Mammary epithelial cell (primary cell): ENCODE measurements at regions of chr7 and their contacts with region 1.

Region 1: DNA sequence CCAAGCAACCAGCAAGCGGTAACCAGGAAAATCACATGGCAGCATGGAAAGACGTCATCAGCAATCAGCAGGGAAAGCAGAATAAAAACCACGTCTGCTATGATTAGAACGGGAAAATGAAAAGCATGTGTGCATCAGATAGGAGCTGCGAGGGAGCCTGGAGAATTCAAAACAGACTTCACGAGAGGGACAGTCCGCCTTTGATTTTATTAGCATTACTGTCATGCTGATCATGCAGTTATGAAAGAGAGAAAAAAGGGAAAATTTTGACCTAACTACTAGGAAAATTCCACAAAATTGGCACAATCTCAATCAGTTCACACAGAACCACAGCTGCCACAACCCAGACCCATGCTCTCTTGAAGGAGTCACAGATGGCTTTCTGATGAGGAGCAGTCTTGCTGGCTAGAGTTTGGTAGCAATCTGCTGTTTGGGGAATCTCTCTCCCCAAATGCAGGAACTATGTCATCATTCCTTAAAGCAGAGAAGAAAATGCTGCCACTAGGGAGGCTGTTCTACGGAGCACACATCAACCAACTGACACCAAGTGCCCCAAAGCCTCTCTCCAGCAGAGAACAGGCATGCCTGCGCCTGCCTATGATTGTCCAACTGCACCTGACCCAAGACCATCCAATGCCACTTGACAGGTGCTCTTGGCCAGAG is 295.9 kb downstream of the TNS3 start:
- DNase-seq: no peak
- H3K4me3 ChIP-seq: no peak overlapping the region
- H3K27ac ChIP-seq: no peak overlapping the region
- H3K4me1 ChIP-seq: peaks cover 27% of the 10 kb centered on the region
- H3K27me3 ChIP-seq: no peaks in the 10 kb centered on the region
- CTCF ChIP-seq: no peak

Region 2: GRCh38 chr7:47327698-47328391 is 41.9 kb after region 1 on chr7:
- CTCF ChIA-PET with region 1: no interaction called
- dilution Hi-C with region 1: loop called (anchors 5 kb)
- in situ Hi-C with region 1: no loop called
- intact Hi-C with region 1: no loop called
- DNase-seq: peak; percentile 62
- H3K4me3 ChIP-seq: peak overlapping the region; percentile 1 to 32 (median 27)
- H3K27ac ChIP-seq: peak overlapping the region; percentile 3
- H3K4me1 ChIP-seq: peaks cover 55% of the 10 kb centered on the region
- H3K27me3 ChIP-seq: no peaks in the 10 kb centered on the region
- CTCF ChIP-seq: no peak

Region 3: DNA sequence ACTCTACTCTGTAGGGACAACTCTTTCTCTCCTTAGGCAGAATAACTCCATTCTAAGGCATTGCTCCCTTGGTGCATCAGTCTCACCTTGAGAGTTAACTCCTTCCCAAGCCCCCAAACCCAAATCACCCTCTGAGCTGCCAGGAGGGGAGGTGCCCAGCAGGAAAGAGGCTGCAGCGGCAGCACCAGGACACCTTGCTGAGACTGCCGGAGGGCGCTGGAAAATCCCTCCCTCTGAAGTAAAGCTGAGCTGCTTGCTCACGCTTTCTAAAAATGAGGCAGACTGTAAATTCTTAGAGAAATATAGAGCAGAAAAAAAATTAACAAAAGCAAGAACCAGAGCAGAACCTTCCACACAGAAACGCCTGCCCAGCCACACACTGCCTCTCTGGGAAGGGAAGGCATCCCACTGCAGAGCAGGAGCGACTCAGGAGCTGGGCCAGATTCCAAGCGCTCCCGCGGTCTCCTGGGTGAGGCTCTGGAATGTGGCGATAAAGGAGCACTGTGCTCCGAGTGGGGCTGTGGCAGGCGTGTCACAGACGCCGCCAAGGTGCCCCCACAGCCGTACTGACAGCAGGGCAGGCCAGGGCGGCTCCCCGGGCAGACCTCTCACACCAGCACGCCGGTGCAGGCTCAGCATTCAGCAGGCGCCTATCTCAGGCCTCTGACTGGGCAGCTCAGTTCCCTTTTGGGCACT is 93.8 kb after region 1 on chr7:
- CTCF ChIA-PET with region 1: no interaction called
- dilution Hi-C with region 1: no loop called
- in situ Hi-C with region 1: no loop called
- intact Hi-C with region 1: no loop called
- DNase-seq: peak; percentile 62
- H3K4me3 ChIP-seq: no peak overlapping the region
- H3K27ac ChIP-seq: no peak overlapping the region
- H3K4me1 ChIP-seq: peaks cover 30% of the 10 kb centered on the region
- H3K27me3 ChIP-seq: no peaks in the 10 kb centered on the region
- CTCF ChIP-seq: no peak